ENCODE measurements at regions of chr11 and their contacts with region 1.

Region 1: DNA sequence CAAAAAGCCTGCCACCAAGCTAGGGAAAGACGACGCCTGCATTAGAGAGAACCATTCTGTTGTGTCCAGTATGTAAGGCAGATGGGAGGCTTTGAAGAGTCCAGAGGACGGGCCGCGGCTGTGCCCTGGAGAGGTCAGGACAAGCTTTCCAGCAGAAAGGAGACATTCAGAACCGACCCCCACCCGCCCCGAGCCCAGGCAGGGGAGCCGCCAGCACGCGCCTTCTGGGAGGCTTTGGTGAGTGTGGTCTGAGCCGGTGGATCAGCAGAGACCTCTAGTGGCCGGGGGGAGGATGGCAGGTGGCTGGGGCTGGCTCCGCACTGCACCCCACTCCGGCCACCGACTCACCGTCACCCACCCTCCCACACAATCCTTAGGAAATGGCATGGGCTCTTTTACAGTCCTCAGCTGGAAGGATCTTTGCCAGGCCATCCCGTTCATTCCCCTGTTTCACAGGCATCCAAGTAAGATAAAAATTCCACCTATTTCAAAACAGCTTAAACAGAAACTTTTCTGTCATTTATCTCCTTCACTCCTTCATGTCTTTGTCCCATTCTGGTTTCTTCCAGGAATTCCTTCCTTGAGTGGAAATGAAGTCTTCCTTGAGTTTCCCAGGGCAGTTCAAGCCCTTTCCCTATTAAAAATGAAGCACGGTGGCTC is 91.2 kb downstream of the FEZ1 start:
- DNase-seq: peak; percentile 58 to 74 (median 67)
- ATAC-seq: peak; percentile 85
- H3K4me3 ChIP-seq: no peak overlapping the region
- H3K27ac ChIP-seq: no peak overlapping the region
- H3K4me1 ChIP-seq: peaks cover 7% of the 10 kb centered on the region
- H3K27me3 ChIP-seq: no peaks in the 10 kb centered on the region
- CTCF ChIP-seq: peak; percentile 78 to 98 (median 88)
- POLR2A ChIP-seq: no peak

Region 2: GRCh38 chr11:124644426-124645280 is 760.3 kb before region 1 on chr11:
- intact Hi-C with region 1: loop called (anchors 10 kb)
- DNase-seq: peak; percentile 59 to 73 (median 70)
- ATAC-seq: peak; percentile 97
- H3K4me3 ChIP-seq: no peak overlapping the region
- H3K27ac ChIP-seq: no peak overlapping the region
- H3K4me1 ChIP-seq: peaks cover 7% of the 10 kb centered on the region
- H3K27me3 ChIP-seq: no peaks in the 10 kb centered on the region
- CTCF ChIP-seq: peak; percentile 67 to 88 (median 84)
- POLR2A ChIP-seq: no peak